ENCODE measurements at regions of chr12 and their contacts with region 1.

Region 1: GRCh38 chr12:6944381-6945186 is 762 bp downstream of the C12orf57 start:
- DNase-seq: peak; percentile 95 to 96
- H3K4me3 ChIP-seq: peak overlapping the region; percentile 74
- H3K27ac ChIP-seq: peak overlapping the region; percentile 94 to 98
- H3K4me1 ChIP-seq: peaks cover 0 to 46% (median 33%) of the 10 kb centered on the region in 4 donors
- H3K27me3 ChIP-seq: no peaks in the 10 kb centered on the region
- CTCF ChIP-seq: peak; percentile 77 to 96

Region 2: GRCh38 chr12:6867413-6868210 is 77.0 kb before region 1 on chr12 and contains the start of gene TPI1:
- intact Hi-C with region 1: loop called (anchors 5 kb)
- DNase-seq: peak in 1 of 2 donors; percentile 94
- H3K4me3 ChIP-seq: peak within 1 kb of the TSS; percentile 94 to 100
- H3K27ac ChIP-seq: peak within 1 kb of the TSS; percentile 99 to 100
- H3K4me1 ChIP-seq: peaks cover 0 to 55% (median 44%) of the 10 kb centered on the region in 4 donors
- H3K27me3 ChIP-seq: no peaks in the 10 kb centered on the region
- CTCF ChIP-seq: peak in 1 of 2 experiments; percentile 6

Measured in tibial artery (tissue), 4 donors.